ENCODE measurements at regions of chr1 and their contacts with region 1.

Region 1: GRCh38 chr1:171741872-171742576 is at the start of gene VAMP4:
- DNase-seq: peak; percentile 95
- H3K4me3 Mint-ChIP-seq: peak within 1 kb of the TSS; percentile 100
- H3K27ac Mint-ChIP-seq: peak within 1 kb of the TSS; percentile 100
- H3K4me1 Mint-ChIP-seq: peaks cover 51% of the 10 kb centered on the region
- H3K27me3 Mint-ChIP-seq: no peaks in the 10 kb centered on the region
- total RNA-seq, gene VAMP4: 7.7 TPM in 2 replicates

Region 2: DNA sequence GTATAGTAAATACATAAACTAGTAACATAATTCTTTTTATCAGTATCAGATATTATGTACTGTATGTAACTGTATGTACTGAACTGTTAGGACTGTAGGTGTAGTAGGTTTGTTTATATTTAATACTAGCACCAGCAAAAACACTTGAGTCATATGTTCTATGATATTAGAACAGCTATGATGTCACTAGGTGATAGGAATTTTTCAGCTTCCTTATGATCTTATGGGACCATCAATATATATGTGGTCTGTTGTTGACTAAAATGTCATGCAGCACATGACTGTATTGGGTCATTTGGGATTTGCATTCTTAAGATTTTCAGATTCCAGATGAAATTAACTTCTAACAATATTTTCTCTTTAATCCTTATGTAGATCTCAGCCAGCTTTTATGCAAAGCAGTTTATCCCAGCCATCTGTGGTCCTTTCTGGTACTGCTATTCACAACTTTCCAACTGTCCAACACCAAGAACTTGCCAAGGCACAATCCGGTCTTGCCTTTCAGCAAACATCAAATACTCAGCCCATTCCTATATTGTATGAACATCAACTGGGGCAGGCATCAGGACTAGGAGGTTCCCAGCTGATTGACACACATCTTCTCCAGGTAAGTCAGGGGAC is 158.3 kb before region 1 on chr1:
- intact Hi-C with region 1: loop called (anchors 5 kb)
- DNase-seq: no peak
- H3K4me3 Mint-ChIP-seq: no peak overlapping the region
- H3K27ac Mint-ChIP-seq: peak overlapping the region; percentile 45
- H3K4me1 Mint-ChIP-seq: peaks cover 28% of the 10 kb centered on the region
- H3K27me3 Mint-ChIP-seq: no peaks in the 10 kb centered on the region

Region 3: GRCh38 chr1:171781176-171781875 is 39.3 kb after region 1 on chr1 and contains the start of gene METTL13:
- intact Hi-C with region 1: loop called (anchors 1 kb)
- DNase-seq: peak; percentile 100
- H3K4me3 Mint-ChIP-seq: peak within 1 kb of the TSS; percentile 98
- H3K27ac Mint-ChIP-seq: peak within 1 kb of the TSS; percentile 94
- H3K4me1 Mint-ChIP-seq: peaks cover 45% of the 10 kb centered on the region
- H3K27me3 Mint-ChIP-seq: no peaks in the 10 kb centered on the region
- total RNA-seq, gene METTL13: 56.1 and 57.8 TPM in 2 replicates

Region 4: GRCh38 chr1:171984850-171985485 is 242.9 kb after region 1 on chr1:
- intact Hi-C with region 1: loop called (anchors 5 kb)
- DNase-seq: peak; percentile 68
- H3K4me3 Mint-ChIP-seq: no peak overlapping the region
- H3K27ac Mint-ChIP-seq: no peak overlapping the region
- H3K4me1 Mint-ChIP-seq: no peaks in the 10 kb centered on the region
- H3K27me3 Mint-ChIP-seq: peaks cover 10% of the 10 kb centered on the region